ENCODE measurements at regions of chr1 and their contacts with region 1.

Region 1: DNA sequence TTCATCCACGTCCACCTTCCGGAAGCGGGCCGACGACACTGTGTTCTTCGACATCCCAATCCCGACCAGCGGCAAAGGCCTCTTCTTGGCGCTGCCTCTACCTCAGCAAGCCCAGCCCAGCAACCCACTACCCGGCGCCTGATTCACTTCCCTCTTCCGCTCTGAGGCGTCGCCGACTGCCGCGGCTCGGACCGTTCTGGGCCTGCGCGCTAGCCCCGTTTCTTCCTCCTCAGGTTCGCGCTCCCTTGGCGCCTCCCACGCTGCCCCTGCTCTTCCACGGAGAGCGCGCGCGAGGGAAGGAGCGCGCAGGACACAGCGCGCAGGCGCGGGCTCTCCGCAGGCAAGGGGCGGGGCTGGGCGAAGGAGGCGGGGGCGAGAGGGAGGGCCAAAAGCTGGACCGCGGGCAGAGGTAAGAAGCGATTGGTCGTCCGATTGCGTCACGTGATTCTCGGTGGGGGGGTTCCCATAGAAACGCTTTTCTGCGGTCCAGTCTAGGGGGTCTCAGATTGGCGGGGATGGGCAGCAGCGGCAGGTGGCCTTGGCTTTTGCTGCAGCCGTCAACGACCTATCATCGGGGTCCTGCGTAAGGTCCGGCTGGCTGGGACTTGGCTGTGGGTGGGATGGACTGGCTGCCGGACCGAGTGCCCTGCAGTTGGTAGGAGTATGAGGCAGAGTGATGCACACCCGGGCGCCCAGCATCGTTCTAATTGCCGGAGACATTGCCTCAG is at the start of gene ARPC5:
- DNase-seq: peak; percentile 89 to 98 (median 94)
- ATAC-seq: peak; percentile 85
- H3K4me3 ChIP-seq: peak within 1 kb of the TSS; percentile 82 to 94
- H3K4me3 Mint-ChIP-seq: peak within 1 kb of the TSS; percentile 100
- H3K27ac ChIP-seq: peak within 1 kb of the TSS; percentile 61 to 82
- H3K27ac Mint-ChIP-seq: peak within 1 kb of the TSS; percentile 99
- H3K4me1 ChIP-seq: peaks cover 31% of the 10 kb centered on the region
- H3K4me1 Mint-ChIP-seq: peaks cover 47% of the 10 kb centered on the region
- H3K27me3 ChIP-seq: no peaks in the 10 kb centered on the region
- H3K27me3 Mint-ChIP-seq: no peaks in the 10 kb centered on the region
- CTCF ChIP-seq: no peak
- total RNA-seq, gene ARPC5: 14.2 to 17.1 TPM

Region 2: GRCh38 chr1:182614796-182615454 is 1020.8 kb before region 1 on chr1:
- CTCF ChIA-PET with region 1: no interaction called
- POLR2A ChIA-PET with region 1: no interaction called
- intact Hi-C with region 1: loop called in 1 of 2 experiments (anchors 10 kb)
- DNase-seq: peak in 6 of 9 experiments; percentile 12 to 70 (median 42)
- ATAC-seq: peak; percentile 3
- H3K4me3 ChIP-seq: peak overlapping the region; percentile 38 to 46
- H3K4me3 Mint-ChIP-seq: peak overlapping the region; percentile 73
- H3K27ac ChIP-seq: no peak overlapping the region
- H3K27ac Mint-ChIP-seq: peak overlapping the region; percentile 91
- H3K4me1 ChIP-seq: peaks cover 32% of the 10 kb centered on the region
- H3K4me1 Mint-ChIP-seq: peaks cover 30% of the 10 kb centered on the region
- H3K27me3 ChIP-seq: peaks cover 19 to 25% of the 10 kb centered on the region in 2 experiments
- H3K27me3 Mint-ChIP-seq: peaks cover 66% of the 10 kb centered on the region
- CTCF ChIP-seq: no peak

Region 3: DNA sequence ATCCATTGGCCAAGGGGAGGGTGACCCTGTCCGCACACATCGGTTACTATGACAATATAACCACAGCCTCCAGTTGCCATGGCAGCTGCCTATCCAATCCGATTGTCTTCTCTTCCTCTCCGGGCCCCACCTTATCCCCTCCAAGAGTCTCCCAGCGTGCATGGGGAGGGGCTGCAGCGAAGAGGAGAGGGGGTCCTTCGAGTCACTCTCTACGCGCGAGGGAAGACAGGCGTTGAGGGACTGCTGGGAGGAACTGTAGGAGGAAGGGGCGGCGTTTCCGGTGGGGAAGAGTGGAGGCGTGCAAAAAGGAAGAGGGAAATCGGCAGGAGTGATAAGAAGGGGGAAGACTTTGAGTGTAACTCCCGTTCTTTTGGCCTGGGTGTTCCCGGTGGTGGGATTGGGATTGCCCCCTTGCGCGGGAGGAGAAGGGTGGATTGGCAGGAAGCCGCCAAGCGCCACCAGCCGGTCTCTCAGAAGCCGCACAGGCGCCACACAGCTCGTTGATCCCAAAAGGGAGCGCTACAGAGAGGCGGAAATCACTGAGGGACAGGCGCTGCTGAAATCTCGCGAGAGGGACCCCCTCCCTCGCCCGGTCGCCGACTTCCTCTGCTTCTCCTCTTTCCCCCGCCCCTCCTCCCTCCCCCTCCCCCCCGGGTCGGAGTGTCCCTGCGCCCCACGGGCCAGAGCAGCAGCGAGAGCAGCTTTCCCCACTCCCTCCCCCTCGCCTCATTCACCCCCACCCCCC is 163.9 kb before region 1 on chr1:
- CTCF ChIA-PET with region 1: interaction called, 8 read pairs
- POLR2A ChIA-PET with region 1: interaction called, 14 read pairs
- intact Hi-C with region 1: loop called (anchors 1 kb)
- DNase-seq: peak; percentile 92 to 98 (median 96)
- ATAC-seq: peak; percentile 65
- H3K4me3 ChIP-seq: peak overlapping the region; percentile 83 to 86
- H3K4me3 Mint-ChIP-seq: peak overlapping the region; percentile 98
- H3K27ac ChIP-seq: peak overlapping the region; percentile 90 to 97
- H3K27ac Mint-ChIP-seq: peak overlapping the region; percentile 99
- H3K4me1 ChIP-seq: peaks cover 32% of the 10 kb centered on the region
- H3K4me1 Mint-ChIP-seq: peaks cover 24% of the 10 kb centered on the region
- H3K27me3 ChIP-seq: no peaks in the 10 kb centered on the region
- H3K27me3 Mint-ChIP-seq: no peaks in the 10 kb centered on the region
- CTCF ChIP-seq: no peak

Region 4: DNA sequence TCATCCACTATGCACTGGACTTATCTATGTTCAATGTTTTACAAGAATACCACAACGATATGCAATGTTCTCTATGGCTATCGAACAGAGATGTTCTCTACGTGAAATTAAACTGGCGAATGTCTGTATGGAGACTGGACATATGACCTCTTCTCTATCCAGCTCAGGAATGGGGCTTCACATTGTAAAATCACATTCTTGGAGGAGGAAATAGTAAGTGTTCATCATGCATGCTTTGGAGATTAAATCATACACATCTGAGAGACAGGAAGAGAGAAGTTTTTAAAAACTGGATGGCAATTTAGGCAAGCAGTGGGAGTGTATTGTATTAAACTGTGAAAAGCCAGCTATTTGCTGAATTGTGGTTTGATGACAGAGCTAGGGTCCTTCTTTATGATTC is 121.3 kb after region 1 on chr1:
- CTCF ChIA-PET with region 1: no interaction called
- POLR2A ChIA-PET with region 1: interaction called, 10 read pairs
- intact Hi-C with region 1: no loop called
- DNase-seq: no peak
- ATAC-seq: no peak
- H3K4me3 ChIP-seq: no peak overlapping the region
- H3K4me3 Mint-ChIP-seq: no peak overlapping the region
- H3K27ac ChIP-seq: no peak overlapping the region
- H3K27ac Mint-ChIP-seq: no peak overlapping the region
- H3K4me1 ChIP-seq: no peaks in the 10 kb centered on the region
- H3K4me1 Mint-ChIP-seq: no peaks in the 10 kb centered on the region
- H3K27me3 ChIP-seq: no peaks in the 10 kb centered on the region
- H3K27me3 Mint-ChIP-seq: no peaks in the 10 kb centered on the region
- CTCF ChIP-seq: no peak

Region 5: GRCh38 chr1:184386312-184387068 is 750.7 kb after region 1 on chr1 and contains the start of gene C1orf21:
- CTCF ChIA-PET with region 1: no interaction called
- POLR2A ChIA-PET with region 1: no interaction called
- intact Hi-C with region 1: loop called (anchors 5 to 10 kb)
- DNase-seq: peak; percentile 40 to 89 (median 66)
- ATAC-seq: peak; percentile 83
- H3K4me3 ChIP-seq: peak within 1 kb of the TSS; percentile 59 to 74
- H3K4me3 Mint-ChIP-seq: peak within 1 kb of the TSS; percentile 84
- H3K27ac ChIP-seq: peak within 1 kb of the TSS; percentile 63 to 88
- H3K27ac Mint-ChIP-seq: peak within 1 kb of the TSS; percentile 83
- H3K4me1 ChIP-seq: peaks cover 10% of the 10 kb centered on the region
- H3K4me1 Mint-ChIP-seq: peaks cover 18% of the 10 kb centered on the region
- H3K27me3 ChIP-seq: peaks cover 2 to 7% of the 10 kb centered on the region in 2 experiments
- H3K27me3 Mint-ChIP-seq: peaks cover 38% of the 10 kb centered on the region
- CTCF ChIP-seq: no peak
- total RNA-seq, gene C1orf21: 2.3 to 3.5 TPM

Region 6: DNA sequence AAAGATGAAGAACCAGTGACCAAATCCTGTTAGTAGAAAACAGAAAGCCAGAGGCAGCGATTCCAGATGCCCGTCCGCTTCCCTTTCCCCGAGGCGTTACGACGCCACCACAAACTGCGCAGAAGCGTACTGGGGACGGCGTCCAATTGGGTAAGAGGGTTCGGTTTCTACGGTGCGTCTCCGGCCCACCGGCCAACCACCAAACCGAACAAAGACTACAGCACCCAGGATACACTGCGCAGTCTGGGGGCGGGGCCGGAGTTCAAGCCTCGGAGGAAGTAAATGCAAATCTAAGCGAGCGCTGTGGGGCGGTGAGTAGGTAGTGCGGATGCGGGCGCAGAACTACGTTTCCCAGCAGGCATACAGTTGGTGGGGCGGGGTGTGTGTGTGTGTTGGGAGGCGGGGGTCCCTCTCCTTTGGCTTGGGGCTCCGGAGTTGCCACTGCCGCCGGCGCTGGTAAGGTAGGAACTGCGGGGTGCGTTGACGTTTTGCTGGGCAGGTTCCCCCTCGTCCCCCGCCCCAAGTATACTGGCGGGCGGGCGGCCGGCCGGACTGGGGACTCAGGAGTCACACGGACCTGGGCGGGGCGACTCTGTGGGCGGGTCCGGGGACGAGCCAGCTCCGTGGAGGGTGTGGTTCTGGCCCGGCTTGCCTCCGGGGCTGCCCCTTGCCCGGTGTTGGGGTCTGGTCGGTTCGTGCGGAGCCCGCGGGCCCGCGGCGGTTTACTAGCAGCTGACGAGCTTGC is 1521.3 kb after region 1 on chr1 and contains the starts of genes SWT1 and TRMT1L:
- CTCF ChIA-PET with region 1: no interaction called
- POLR2A ChIA-PET with region 1: no interaction called
- intact Hi-C with region 1: loop called (anchors 5 to 10 kb)
- DNase-seq: peak; percentile 96 to 99 (median 98)
- ATAC-seq: peak; percentile 89
- H3K4me3 ChIP-seq: peak within 1 kb of the TSS; percentile 75 to 97
- H3K4me3 Mint-ChIP-seq: peak within 1 kb of the TSS; percentile 99
- H3K27ac ChIP-seq: peak within 1 kb of the TSS; percentile 86 to 98
- H3K27ac Mint-ChIP-seq: peak within 1 kb of the TSS; percentile 99
- H3K4me1 ChIP-seq: peaks cover 17% of the 10 kb centered on the region
- H3K4me1 Mint-ChIP-seq: peaks cover 49% of the 10 kb centered on the region
- H3K27me3 ChIP-seq: no peaks in the 10 kb centered on the region
- H3K27me3 Mint-ChIP-seq: no peaks in the 10 kb centered on the region
- CTCF ChIP-seq: no peak
- total RNA-seq, gene SWT1: 3.0 to 3.9 TPM
- total RNA-seq, gene TRMT1L: 3.0 to 5.1 TPM

Measured in CD8-positive, alpha-beta T cell (primary cell).